Heart right ventricle (tissue), 16 donors: ENCODE measurements at regions of chr15 and their contacts with region 1.

Region 1: DNA sequence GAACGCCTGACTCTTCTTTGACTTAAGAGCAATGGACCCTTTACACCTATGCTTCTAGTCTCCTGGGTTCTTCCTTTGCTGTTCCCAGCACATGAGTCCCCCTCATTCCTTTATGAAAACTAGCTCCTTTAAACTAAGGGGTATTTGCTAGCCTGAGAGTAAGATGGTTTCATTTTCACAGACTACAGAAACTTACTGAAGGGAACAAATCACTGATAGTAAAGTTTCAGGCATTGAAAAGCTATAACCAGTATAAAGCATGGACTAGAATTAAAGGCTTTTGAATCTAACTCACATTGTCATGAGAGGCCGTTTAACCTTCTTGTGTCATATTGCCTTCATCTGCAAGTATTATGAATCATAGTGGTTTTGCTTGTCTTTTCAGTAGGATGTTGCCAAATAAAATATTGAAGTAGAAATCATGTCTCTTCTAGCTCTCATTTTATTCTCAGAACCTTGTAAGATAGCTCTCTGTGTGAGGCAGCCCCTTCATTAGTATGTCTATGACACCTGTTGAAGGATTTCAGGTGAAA is 765.9 kb downstream of the NR2F2 start:
- DNase-seq: no peak
- ATAC-seq: no peak
- H3K4me3 ChIP-seq: no peak overlapping the region
- H3K27ac ChIP-seq: no peak overlapping the region
- H3K4me1 ChIP-seq: no peaks in the 10 kb centered on the region
- H3K27me3 ChIP-seq: no peaks in the 10 kb centered on the region
- CTCF ChIP-seq: no peak

Region 2: GRCh38 chr15:96924570-96924969 is 171.8 kb before region 1 on chr15:
- intact Hi-C with region 1: loop called in 1 of 10 experiments (anchors 10 kb)
- DNase-seq: no peak
- ATAC-seq: no peak
- H3K4me3 ChIP-seq: no peak overlapping the region
- H3K27ac ChIP-seq: no peak overlapping the region
- H3K4me1 ChIP-seq: no peaks in the 10 kb centered on the region
- H3K27me3 ChIP-seq: peaks cover 0 to 3% (median 0%) of the 10 kb centered on the region in 7 donors
- CTCF ChIP-seq: no peak

Region 3: GRCh38 chr15:97159056-97159455 is 62.7 kb after region 1 on chr15:
- intact Hi-C with region 1: loop called in 1 of 10 experiments (anchors 10 kb)
- DNase-seq: no peak
- ATAC-seq: no peak
- H3K4me3 ChIP-seq: no peak overlapping the region
- H3K27ac ChIP-seq: no peak overlapping the region
- H3K4me1 ChIP-seq: no peaks in the 10 kb centered on the region
- H3K27me3 ChIP-seq: peaks cover 0 to 15% (median 0%) of the 10 kb centered on the region in 7 donors
- CTCF ChIP-seq: no peak